CD4-positive, alpha-beta memory T cell (primary cell): ENCODE measurements at regions of chr1 and their contacts with region 1.

Region 1: GRCh38 chr1:248243204-248243603 is 12.0 kb downstream of the OR2M4 start:
- DNase-seq: peak in 4 of 5 donors; percentile 14 to 32 (median 26)
- H3K4me3 ChIP-seq: no peak overlapping the region
- H3K4me3 Mint-ChIP-seq: peak overlapping the region in 4 of 8 donors; percentile 1 to 62 (median 44)
- H3K27ac ChIP-seq: no peak overlapping the region
- H3K27ac Mint-ChIP-seq: peak overlapping the region in 1 of 7 donors; percentile 7
- H3K4me1 ChIP-seq: peaks cover 3% of the 10 kb centered on the region
- H3K4me1 Mint-ChIP-seq: peaks cover 0 to 2% (median under 1%) of the 10 kb centered on the region in 4 donors
- H3K27me3 ChIP-seq: no peaks in the 10 kb centered on the region
- H3K27me3 Mint-ChIP-seq: peaks cover 3 to 11% of the 10 kb centered on the region in 2 donors

Region 2: DNA sequence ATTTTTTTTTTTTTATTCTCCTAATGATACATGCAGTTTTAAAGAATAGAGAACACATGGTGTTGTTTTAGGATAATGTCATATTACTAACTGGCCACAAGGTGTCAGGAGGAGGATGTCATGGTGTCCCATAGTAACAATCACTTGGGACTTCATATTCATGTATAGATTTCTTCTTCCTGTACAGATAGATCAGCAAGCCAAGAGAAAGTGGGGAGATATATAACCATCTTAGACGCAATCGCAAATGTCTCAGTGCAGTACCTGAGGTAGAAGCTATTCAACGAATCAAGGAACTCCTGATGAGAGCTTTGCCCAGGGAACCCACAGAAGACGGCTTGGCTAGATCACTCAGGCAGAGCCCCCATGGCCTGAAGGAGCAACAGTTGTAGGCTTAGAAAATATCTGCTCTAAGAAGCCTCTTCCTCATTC is 379.4 kb after region 1 on chr1:
- CTCF ChIA-PET with region 1: no interaction called
- POLR2A ChIA-PET with region 1: no interaction called
- intact Hi-C with region 1: loop called (anchors 10 kb)
- DNase-seq: peak in 4 of 5 donors; percentile 3 to 26 (median 16)
- H3K4me3 ChIP-seq: no peak overlapping the region
- H3K4me3 Mint-ChIP-seq: no peak overlapping the region
- H3K27ac ChIP-seq: no peak overlapping the region
- H3K27ac Mint-ChIP-seq: no peak overlapping the region
- H3K4me1 ChIP-seq: no peaks in the 10 kb centered on the region
- H3K4me1 Mint-ChIP-seq: peaks cover 0 to 7% (median 3%) of the 10 kb centered on the region in 4 donors
- H3K27me3 ChIP-seq: no peaks in the 10 kb centered on the region
- H3K27me3 Mint-ChIP-seq: no peaks in the 10 kb centered on the region